Caco-2 (cell line): ENCODE measurements at regions of chr10 and their contacts with region 1.

Region 1: GRCh38 chr10:63217120-63217605 is 84.0 kb downstream of the NRBF2 start:
- DNase-seq: peak in 1 of 2 experiments; percentile 64
- H3K4me3 ChIP-seq: no peak overlapping the region
- H3K4me3 Mint-ChIP-seq: no peak overlapping the region
- H3K27ac Mint-ChIP-seq: no peak overlapping the region
- H3K4me1 ChIP-seq: no peaks in the 10 kb centered on the region; the same call in 1 of the 2 replicates
- H3K4me1 Mint-ChIP-seq: no peaks in the 10 kb centered on the region
- H3K27me3 ChIP-seq: no peaks in the 10 kb centered on the region
- H3K27me3 Mint-ChIP-seq: no peaks in the 10 kb centered on the region
- CTCF ChIP-seq: peak; percentile 74 to 78

Region 2: DNA sequence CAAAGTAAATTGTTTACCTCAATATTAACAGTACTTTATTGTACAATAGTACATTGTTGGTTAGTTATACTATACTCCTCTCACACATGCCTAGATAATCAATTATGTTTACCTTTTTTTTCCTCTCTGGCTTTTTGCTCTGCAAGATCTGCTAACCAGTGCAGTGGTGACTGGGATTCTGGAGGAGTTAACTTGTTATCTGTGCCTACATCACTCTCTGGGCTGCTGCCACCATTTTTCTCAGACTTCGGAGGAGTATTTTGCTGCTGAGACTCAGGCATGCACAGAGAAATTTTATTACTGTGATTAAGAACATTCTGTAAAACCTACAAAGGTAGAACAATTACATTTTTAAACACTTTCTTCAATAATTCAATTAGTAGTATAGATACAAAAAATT is 24.3 kb before region 1 on chr10:
- CTCF ChIA-PET with region 1: no interaction called
- POLR2A ChIA-PET with region 1: no interaction called
- intact Hi-C with region 1: no loop called
- DNase-seq: no peak
- H3K4me3 ChIP-seq: no peak overlapping the region
- H3K4me3 Mint-ChIP-seq: no peak overlapping the region
- H3K27ac Mint-ChIP-seq: no peak overlapping the region
- H3K4me1 ChIP-seq: no peaks in the 10 kb centered on the region
- H3K4me1 Mint-ChIP-seq: no peaks in the 10 kb centered on the region
- H3K27me3 ChIP-seq: no peaks in the 10 kb centered on the region
- H3K27me3 Mint-ChIP-seq: no peaks in the 10 kb centered on the region
- CTCF ChIP-seq: no peak

Region 3: DNA sequence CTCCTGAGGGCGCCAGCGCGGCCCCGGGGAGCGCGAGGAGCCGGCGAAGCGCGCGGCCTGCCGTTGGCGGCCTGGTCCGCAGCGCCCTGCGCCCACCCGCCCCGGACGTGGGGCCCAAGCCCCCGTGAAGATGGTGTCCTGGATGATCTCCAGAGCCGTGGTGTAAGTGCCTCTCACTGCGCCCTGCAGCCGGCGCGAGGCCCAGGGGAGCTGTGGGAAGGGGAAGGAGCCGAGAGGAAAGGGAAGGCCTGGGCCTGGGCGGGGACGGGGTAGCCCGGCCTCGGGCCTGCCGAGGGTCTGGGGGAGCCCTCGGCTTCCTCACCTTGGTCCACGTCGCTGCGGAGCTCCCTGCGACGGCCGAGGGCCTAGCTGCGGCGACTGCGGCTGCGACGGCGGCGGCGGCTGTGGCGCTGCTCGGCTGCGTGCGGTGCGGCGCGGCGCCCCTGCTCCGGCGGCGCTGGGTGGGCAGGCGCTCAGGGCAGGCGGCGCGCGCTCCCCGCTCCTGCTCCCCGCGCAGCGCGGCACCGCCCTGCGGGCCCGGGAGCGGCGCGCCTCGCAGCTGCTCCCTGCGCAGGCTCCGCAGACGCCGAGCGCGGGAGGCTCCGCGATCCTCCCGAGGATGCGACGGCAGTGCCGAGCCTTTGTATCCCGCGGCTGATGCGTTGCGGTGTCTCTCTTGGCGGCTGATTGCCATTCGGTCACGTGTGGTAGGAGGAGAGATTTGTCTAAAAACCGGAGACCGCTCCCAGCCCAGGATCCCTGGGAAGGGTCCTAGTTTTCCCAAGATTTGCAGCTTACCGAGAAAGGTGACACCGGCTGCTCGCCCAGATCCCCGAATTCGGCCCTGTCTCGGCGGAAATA is 304.5 kb after region 1 on chr10:
- CTCF ChIA-PET with region 1: no interaction called
- POLR2A ChIA-PET with region 1: no interaction called
- intact Hi-C with region 1: loop called (anchors 10 kb)
- DNase-seq: peak; percentile 79 to 86
- H3K4me3 ChIP-seq: peak overlapping the region; percentile 96
- H3K4me3 Mint-ChIP-seq: peak overlapping the region; percentile 83
- H3K27ac Mint-ChIP-seq: peak overlapping the region; percentile 92
- H3K4me1 ChIP-seq: peaks cover 17% of the 10 kb centered on the region
- H3K4me1 Mint-ChIP-seq: peaks cover 43% of the 10 kb centered on the region
- H3K27me3 ChIP-seq: no peaks in the 10 kb centered on the region
- H3K27me3 Mint-ChIP-seq: no peaks in the 10 kb centered on the region
- CTCF ChIP-seq: no peak